ENCODE measurements at regions of chr10 and their contacts with region 1.

Region 1: GRCh38 chr10:35421553-35422178 is 85.4 kb downstream of the CCNY start:
- DNase-seq: peak; percentile 94
- ATAC-seq: peak; percentile 89
- H3K4me3 ChIP-seq: no peak overlapping the region
- H3K27ac ChIP-seq: peak overlapping the region; percentile 89
- H3K4me1 ChIP-seq: peaks cover 33% of the 10 kb centered on the region
- H3K27me3 ChIP-seq: no peaks in the 10 kb centered on the region
- CTCF ChIP-seq: no peak
- POLR2A ChIP-seq: no peak
- RAD21 ChIP-seq: no peak

Region 2: DNA sequence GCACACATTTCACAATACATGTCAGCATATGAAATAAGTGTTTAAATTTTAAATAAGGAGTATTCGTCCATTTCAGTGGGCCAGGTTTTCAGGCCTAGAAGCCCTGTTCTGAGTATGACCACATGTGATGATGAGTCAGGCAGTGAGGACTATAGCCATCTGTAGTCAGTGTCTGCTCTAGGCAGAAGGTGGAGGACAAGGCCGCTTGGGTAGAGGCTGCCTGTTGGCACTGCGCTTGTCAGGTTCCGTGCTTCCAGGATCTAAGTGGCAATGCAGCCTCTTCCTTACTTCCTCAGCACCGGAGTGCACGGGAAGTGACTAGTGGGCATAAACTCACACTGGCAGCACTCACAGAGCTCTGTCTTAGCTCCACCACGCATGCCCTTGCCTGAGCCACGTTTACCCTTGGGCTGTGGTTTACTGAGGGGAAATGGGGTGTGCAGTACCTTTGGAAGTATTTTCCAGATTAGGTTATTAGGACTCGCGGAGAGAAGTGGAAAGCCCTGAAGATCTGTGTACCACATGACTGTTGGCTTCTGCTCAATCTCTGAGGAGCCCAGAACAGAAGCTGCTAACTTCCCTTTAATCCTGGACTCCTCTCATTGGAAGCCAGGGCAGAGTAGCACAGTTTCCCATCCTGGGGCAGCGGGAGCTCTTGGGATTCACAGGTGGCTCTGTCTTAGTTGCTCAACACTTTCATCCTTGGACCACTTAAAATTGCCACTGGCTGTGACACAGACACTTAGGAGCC is 95.9 kb after region 1 on chr10:
- CTCF ChIA-PET with region 1: no interaction called
- POLR2A ChIA-PET with region 1: no interaction called
- dilution Hi-C with region 1: no loop called
- in situ Hi-C with region 1: no loop called
- intact Hi-C with region 1: loop called (anchors 10 kb)
- DNase-seq: peak; percentile 54
- ATAC-seq: peak; percentile 32; the same call in 1 of the 2 replicates
- H3K4me3 ChIP-seq: no peak overlapping the region
- H3K27ac ChIP-seq: no peak overlapping the region
- H3K4me1 ChIP-seq: peaks cover 6% of the 10 kb centered on the region
- H3K27me3 ChIP-seq: no peaks in the 10 kb centered on the region
- CTCF ChIP-seq: no peak
- POLR2A ChIP-seq: no peak
- RAD21 ChIP-seq: no peak

Region 3: GRCh38 chr10:35607475-35608327 is 186.0 kb after region 1 on chr10:
- CTCF ChIA-PET with region 1: no interaction called
- POLR2A ChIA-PET with region 1: no interaction called
- dilution Hi-C with region 1: no loop called
- in situ Hi-C with region 1: no loop called
- intact Hi-C with region 1: loop called (anchors 5 kb)
- DNase-seq: no peak
- ATAC-seq: peak; percentile 58
- H3K4me3 ChIP-seq: peak overlapping the region; percentile 37
- H3K27ac ChIP-seq: no peak overlapping the region
- H3K4me1 ChIP-seq: peaks cover 7% of the 10 kb centered on the region
- H3K27me3 ChIP-seq: peaks cover 31% of the 10 kb centered on the region
- CTCF ChIP-seq: no peak
- POLR2A ChIP-seq: no peak
- RAD21 ChIP-seq: no peak

Measured in IMR-90 (cell line).